Cardiac septum (tissue), 1 donor: ENCODE measurements at regions of chr11 and their contacts with region 1.

Region 1: DNA sequence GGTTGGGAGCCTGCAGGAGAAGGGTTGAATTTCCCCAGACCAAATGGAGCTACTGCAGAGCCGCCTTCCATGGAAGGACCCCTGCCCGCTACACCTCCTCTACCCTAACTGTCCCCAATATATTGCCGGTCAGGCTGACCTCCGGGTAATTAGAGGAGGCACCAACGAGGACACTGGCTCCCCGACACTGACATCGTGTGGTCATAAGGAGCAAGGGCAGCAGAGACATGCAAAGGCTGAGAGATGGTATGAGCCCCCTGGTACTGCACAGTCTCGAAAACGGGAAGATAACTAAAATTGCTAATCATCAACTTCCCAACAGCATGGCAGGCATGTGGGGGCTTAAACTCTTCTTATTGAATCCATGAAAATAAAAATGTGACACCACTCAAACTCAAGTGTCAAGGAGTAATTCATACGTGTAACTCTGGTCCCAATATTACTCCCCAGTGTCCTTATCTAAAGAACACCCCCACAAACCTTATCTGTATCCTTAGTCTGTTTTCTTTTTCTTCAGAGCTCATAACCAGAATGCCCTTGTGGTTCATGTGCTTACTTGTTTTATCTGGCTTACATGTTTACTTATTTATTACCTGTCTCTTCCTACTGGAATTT is 4.4 kb downstream of the CAVIN3 start:
- DNase-seq: no peak

Region 2: DNA sequence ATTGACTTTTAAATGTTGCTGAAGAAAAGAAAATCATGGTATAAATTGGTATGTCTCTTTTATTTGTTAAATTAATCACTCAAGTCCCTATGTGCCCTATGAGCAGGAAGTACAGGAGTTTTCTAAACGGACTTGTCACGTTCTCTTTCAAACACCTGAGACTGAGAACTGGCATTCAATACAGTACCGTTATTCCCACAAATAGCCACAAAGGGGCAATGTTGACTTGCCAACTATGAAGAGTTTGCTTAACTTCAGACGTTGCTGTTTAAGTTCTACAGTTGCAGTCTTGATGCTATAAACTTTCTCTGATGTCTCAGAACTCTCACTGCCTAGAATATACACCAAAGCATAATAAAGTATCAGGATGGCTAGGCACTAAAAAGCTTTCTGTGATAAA is 293.0 kb before region 1 on chr11:
- intact Hi-C with region 1: loop called (anchors 5 kb)
- DNase-seq: no peak

Region 3: DNA sequence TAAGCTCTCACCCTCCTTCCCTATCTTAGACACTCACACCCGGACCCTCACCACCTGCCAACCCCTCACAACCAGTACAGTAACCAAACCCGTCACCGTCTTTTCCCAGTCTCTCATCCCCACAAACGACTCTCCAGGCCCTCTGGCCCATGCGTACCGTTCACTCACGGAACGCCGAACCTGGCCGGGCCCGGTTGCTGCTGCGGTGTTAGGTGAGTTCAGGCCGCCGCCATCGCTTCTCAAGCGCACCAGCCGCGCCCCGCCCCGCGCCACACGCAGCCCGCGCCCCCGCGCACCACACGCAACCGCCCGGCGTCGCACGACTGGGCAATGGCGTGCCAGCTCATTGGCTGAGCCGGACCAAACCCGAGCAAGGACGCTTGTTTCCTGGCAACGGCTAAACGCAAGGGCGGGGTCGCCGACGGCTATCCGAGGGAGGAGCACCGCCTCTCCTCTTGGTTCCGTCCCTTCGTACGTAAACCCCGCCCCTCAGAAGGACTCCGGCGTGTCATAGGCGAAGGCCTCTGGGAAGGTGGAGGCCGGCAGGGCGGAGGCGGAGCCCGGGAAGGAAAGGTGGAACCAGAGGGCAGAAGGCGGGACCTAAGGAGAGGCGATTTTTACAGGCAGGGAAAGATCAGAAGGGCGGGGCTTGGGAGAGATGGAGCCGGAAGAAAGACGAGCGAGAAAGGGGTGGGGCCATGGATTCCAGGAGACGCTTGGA is 81.4 kb before region 1 on chr11 and contains the start of gene FHIP1B:
- intact Hi-C with region 1: loop called (anchors 1 kb)
- DNase-seq: peak; percentile 100
- total RNA-seq, gene FHIP1B: 19.7 TPM

Region 4: GRCh38 chr11:6251120-6251733 is 64.7 kb before region 1 on chr11:
- intact Hi-C with region 1: loop called (anchors 5 kb)
- DNase-seq: no peak

Region 5: GRCh38 chr11:6362873-6363678 is 47.2 kb after region 1 on chr11:
- intact Hi-C with region 1: loop called (anchors 1 kb)
- DNase-seq: peak; percentile 89

Region 6: GRCh38 chr11:6389921-6390724 is 74.2 kb after region 1 on chr11 and contains the start of gene SMPD1:
- intact Hi-C with region 1: no loop called
- DNase-seq: peak; percentile 98
- total RNA-seq, gene SMPD1: 57.8 TPM